Activated CD4-positive, alpha-beta T cell treated with anti-CD3 and anti-CD28 coated beads, Interleukin-2, amount 10 ng/mL, durations not matched to agents 24 days and 14 days (primary cell): ENCODE measurements at regions of chr10 and their contacts with region 1.

Region 1: DNA sequence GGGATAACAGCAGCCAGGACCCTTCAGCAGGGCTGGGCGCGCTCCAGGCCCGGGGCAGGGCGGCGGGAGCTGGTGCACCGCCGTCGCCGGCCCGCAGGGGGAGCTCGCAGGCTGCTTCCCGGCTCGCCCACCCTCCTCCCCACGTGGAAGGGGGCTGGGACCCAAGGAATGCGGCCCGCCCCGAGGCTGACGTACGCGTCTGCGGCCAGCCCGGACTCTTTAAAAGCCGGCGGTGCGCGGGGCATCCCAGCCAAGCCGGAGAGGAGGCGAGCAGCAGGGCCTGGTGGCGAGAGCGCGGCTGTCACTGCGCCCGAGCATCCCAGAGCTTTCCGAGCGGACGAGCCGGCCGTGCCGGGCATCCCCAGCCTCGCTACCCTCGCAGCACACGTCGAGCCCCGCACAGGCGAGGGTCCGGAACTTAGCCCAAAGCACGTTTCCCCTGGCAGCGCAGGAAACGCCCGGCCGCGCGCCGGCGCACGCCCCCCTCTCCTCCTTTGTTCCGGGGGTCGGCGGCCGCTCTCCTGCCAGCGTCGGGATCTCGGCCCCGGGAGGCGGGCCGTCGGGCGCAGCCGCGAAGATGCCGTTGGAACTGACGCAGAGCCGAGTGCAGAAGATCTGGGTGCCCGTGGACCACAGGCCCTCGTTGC is at the start of gene PFKFB3:
- DNase-seq: peak; percentile 99
- H3K4me3 Mint-ChIP-seq: peak within 1 kb of the TSS; percentile 92
- H3K27ac Mint-ChIP-seq: peak within 1 kb of the TSS; percentile 97
- H3K4me1 Mint-ChIP-seq: peaks cover 42% of the 10 kb centered on the region
- H3K27me3 Mint-ChIP-seq: no peaks in the 10 kb centered on the region
- total RNA-seq, gene PFKFB3: 108 TPM in 2 replicates

Region 2: GRCh38 chr10:6144406-6145165 is 58.2 kb before region 1 on chr10:
- intact Hi-C with region 1: loop called (anchors 1 kb)
- DNase-seq: peak; percentile 98
- H3K4me3 Mint-ChIP-seq: peak overlapping the region; percentile 89
- H3K27ac Mint-ChIP-seq: peak overlapping the region; percentile 81
- H3K4me1 Mint-ChIP-seq: peaks cover 73% of the 10 kb centered on the region
- H3K27me3 Mint-ChIP-seq: no peaks in the 10 kb centered on the region

Region 3: DNA sequence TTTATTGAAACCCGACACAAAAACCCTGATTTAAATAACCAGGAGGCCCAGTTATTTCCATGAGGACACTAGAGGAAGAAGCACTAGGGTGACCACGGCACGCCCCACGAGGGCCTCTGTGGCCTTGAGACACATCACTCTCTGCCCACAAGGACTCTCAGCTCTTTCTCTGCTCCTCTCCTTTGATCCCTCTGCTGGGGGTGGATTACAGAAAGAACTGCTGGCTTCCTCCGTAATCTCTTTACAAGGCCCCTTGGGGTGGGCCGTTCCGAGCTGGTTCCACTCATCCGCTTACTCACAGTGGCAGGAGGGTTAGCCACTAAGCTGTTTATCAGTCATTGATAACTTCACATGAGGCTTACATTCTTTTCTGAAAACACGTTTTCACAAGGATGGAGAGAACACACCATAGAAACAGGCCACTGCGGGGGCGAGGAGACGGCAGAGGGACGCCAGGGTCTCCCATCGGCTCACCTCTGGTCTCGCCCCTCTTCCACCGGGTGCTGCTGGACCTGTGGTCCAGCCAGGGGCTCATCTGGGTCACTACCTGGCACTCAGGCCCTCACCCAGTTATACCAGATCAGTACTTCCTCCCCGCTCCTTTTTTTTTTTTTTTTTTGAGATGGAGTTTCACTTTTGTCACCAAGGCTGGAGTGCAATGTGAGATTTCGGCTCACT is 17.6 kb before region 1 on chr10:
- intact Hi-C with region 1: loop called (anchors 2 kb)
- DNase-seq: no peak
- H3K4me3 Mint-ChIP-seq: no peak overlapping the region
- H3K27ac Mint-ChIP-seq: peak overlapping the region; percentile 64
- H3K4me1 Mint-ChIP-seq: peaks cover 32% of the 10 kb centered on the region
- H3K27me3 Mint-ChIP-seq: no peaks in the 10 kb centered on the region

Region 4: DNA sequence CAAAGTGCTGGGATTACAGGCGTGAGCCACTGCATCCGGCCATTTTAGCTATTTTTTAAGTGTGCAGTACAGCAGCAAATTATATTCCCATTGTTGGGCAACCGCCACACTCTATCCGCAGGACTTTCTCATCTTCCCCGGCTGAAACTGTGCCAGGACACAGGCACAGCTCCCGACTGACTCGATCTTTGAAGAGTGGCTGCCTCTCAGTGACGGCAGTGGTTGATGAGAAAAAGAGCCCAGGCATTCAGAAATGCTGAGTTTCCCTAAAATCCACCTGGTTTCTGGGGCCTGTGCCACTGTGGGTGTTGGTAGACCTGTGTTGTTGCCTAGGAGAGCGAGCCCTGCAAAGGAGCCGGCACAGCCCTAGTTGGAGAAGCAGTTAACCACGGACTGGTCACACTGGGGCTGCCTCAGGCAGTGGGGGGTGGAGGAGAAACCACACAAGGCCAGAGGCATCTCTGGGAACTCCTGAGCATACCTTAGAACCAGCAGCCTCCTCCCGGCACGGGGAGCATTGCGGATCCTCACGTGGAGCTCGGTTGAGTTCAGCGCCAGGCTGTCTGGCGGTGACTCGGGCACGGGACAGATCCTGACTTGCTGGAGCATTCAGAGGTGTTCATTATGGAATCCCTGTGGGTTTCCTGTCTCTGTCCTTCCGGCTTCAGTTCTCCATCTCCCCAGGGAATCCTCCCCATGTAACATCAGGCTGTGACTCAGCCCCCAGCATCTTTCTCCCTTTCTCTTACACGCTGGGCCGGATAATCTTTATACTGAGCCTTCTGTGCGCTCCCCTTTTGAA is 16.1 kb after region 1 on chr10:
- intact Hi-C with region 1: no loop called
- DNase-seq: no peak
- H3K4me3 Mint-ChIP-seq: no peak overlapping the region
- H3K27ac Mint-ChIP-seq: no peak overlapping the region
- H3K4me1 Mint-ChIP-seq: peaks cover 9% of the 10 kb centered on the region
- H3K27me3 Mint-ChIP-seq: no peaks in the 10 kb centered on the region

Region 5: GRCh38 chr10:6292741-6293151 is 89.9 kb after region 1 on chr10:
- intact Hi-C with region 1: loop called (anchors 5 kb)
- DNase-seq: no peak
- H3K4me3 Mint-ChIP-seq: no peak overlapping the region
- H3K27ac Mint-ChIP-seq: peak overlapping the region; percentile 81
- H3K4me1 Mint-ChIP-seq: peaks cover 40% of the 10 kb centered on the region
- H3K27me3 Mint-ChIP-seq: no peaks in the 10 kb centered on the region

Region 6: GRCh38 chr10:6580279-6581029 is 377.6 kb after region 1 on chr10:
- intact Hi-C with region 1: loop called (anchors 5 kb)
- DNase-seq: peak; percentile 96
- H3K4me3 Mint-ChIP-seq: peak overlapping the region; percentile 97
- H3K27ac Mint-ChIP-seq: peak overlapping the region; percentile 88
- H3K4me1 Mint-ChIP-seq: peaks cover 60% of the 10 kb centered on the region
- H3K27me3 Mint-ChIP-seq: no peaks in the 10 kb centered on the region